OCI-LY7 (cell line): ENCODE measurements at regions of chr5 and their contacts with region 1.

Region 1: DNA sequence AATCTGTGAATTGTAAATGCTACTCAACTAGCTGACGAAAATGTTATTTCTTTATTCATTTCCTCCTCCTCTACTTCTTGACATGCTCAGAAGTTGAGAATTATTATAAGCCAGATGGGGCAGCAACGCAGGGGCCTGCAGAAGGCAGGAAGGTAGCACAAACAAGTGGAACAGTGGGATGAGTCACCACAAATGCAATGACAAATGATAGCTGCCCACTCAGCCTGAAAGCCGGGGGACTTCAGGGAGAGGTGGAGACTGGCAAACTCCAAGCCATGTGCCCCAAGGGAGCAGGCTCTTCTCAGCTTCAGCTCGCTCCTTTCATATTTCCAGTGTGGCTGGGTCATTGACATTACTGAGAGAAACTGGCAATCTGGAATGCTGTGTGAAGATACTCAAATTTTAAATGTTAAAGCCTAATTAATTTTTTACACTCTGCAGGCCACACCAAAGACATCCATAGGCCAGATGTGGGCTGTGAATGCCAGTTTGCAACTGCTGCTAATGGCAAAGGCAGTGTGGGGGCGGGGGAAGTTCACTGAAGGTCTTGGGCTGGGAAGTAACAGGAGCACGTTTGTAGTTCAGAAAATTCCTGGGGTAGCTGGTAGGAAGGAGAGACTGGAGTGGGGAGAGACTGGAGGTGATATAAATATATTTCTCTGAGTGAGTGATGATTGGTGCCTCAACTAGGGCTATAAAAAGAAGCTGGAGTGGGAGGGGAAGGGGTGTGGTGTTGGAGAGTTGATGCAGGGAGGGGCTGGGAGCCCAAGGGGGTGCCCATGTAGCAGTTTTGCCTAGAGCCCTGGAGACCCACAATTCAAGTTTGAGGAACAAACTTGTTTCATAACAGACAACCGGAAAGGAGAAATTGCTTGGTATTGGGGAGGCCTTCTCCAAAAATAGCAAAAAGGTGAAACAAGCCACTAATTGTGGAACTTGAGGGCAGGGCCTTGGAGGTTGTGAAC is 20.8 kb upstream of the ADRB2 start:
- DNase-seq: peak; percentile 40
- H3K4me3 ChIP-seq: peak overlapping the region; percentile 12
- H3K27ac ChIP-seq: peak overlapping the region; percentile 93
- H3K4me1 ChIP-seq: peaks cover 52% of the 10 kb centered on the region
- CTCF ChIP-seq: no peak

Region 2: DNA sequence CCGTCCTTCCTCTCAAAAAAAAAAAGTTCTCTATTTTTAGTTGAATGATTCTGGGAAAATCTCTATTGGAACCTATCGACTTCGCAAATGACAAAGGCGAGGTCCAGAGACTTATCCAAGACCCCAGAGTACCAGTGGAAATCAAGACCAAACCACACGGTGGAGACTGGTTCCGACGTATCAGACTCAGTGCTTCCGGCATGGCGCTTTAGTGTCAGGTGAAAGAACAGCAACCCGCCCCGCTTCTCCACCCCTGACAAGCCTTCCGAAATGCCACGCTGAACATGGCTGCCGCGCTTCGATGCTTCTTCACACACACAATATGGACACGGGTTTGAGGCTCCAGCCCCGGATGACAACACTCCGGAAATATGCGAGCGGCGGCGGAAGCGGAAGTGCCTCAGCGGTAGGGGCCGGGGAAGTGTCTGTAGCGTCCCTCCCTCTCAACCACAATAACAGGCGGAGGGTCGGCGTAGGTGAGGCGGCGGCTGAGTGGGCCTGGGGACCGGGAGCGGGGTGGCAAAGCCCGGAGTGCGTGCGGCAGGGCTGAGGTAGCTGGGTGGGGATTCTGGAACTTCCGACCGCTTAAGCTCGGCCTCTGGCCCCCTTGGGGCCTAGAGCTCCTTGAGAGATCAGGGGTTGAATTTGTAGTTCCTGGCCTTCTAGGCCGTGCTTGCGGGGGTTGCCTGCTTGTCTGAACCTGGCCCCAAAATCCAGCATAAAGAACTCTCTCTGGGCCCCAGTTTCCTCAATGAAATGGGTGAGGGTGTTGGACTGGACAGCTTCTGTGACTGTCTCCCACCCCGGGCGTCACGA is 421.8 kb before region 1 on chr5 and contains the start of gene FBXO38:
- CTCF ChIA-PET with region 1: no interaction called
- POLR2A ChIA-PET with region 1: no interaction called
- intact Hi-C with region 1: loop called (anchors 10 kb)
- DNase-seq: peak; percentile 97
- H3K4me3 ChIP-seq: peak within 1 kb of the TSS; percentile 91
- H3K27ac ChIP-seq: peak within 1 kb of the TSS; percentile 59
- H3K4me1 ChIP-seq: peaks cover 26% of the 10 kb centered on the region
- CTCF ChIP-seq: peak; percentile 60
- total RNA-seq, gene FBXO38: 29.9 and 37.6 TPM in 2 replicates

Region 3: DNA sequence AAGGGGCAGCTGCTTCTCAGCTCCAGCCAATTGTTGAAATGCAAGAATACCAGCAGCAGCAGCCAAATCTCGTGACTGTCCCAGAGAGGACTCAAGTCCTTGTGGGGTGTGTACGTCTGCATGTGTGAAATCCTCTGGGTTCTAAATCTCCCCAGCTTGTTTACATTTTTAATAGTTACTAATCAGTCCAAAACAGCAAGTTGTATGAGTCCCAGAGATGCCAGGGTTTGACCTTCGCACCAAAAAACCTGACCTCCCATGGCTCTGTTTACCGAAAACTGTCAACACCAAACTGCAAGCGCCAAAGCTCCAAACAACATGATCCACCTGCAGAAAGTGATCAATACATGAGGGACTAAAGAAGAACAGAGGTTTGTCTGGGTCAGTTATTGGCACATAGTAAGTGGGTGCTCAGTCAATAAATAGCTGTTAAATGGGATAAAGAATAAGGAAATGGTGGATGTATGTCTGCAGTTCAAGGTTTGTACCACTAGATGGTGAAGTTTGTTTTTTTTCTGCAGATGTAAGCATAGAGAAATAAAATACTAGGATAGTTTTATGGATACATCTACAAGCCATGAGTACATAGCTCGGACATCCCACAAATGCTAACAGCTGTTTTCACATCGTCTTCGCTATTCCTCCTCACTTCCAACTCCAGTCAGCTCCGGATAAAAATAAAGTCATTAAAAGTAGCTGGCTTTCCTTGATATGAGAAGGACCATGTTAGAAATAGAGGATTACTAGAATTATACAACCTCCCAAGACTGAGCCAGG is 64.5 kb before region 1 on chr5:
- CTCF ChIA-PET with region 1: no interaction called
- POLR2A ChIA-PET with region 1: interaction called, 3 read pairs
- intact Hi-C with region 1: loop called (anchors 5 kb)
- DNase-seq: peak; percentile 58
- H3K4me3 ChIP-seq: no peak overlapping the region
- H3K27ac ChIP-seq: no peak overlapping the region
- H3K4me1 ChIP-seq: no peaks in the 10 kb centered on the region
- CTCF ChIP-seq: peak; percentile 96